Common myeloid progenitor, CD34-positive (primary cell): ENCODE measurements at regions of chr11 and their contacts with region 1.

Region 1: DNA sequence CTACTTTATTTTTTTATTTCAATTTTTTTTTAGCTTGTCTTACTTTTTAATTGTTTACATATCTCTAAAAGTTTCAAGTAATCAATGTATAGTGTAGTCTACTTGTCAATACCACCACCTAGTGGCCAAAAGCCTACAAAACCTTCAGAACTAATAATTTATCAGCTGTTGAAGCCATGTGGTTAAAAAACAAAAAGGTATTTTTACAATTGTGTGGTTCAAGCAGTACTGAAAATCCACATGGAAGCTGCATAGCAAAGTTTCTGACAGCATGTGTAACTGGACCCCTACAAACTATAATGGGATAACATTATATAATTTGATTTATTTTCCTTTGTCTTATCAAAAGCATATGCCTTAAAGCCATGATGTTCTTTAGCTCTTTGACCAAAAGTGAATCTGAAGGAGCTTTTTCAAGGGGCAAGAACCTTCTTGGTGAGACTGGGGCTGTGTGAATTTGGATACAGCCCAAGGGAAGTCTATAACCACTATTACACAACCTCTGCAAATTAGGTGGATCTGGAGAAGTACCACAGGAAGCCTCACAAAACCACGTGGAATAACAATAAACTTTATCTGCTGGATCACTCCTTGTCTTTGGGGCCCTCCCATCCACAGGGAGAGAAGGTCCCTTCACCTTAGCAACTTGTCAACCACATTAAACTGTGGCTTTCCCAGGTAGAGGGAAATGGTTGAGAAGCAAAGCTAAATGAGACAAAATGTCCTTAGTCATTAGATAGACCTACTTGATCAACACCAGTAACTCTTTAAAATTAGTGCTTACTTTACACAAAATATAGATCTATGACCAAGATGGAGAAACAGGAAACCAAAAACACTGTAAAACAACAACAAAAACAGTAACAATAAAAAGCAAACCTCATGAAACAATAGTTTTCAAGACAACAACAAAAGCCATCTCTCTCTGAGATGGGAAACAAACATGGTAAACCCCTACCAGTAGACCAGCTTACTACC is 9.9 kb downstream of the NARS2 start:
- DNase-seq: peak; percentile 81 to 90 (median 86)
- H3K4me3 ChIP-seq: peak overlapping the region in 3 of 7 experiments; percentile 22 to 40 (median 37)
- H3K27ac ChIP-seq: peak overlapping the region in 1 of 2 experiments; percentile 28
- H3K4me1 ChIP-seq: peaks cover 28 to 54% (median 45%) of the 10 kb centered on the region in 4 experiments
- H3K27me3 ChIP-seq: no peaks in the 10 kb centered on the region

Region 2: GRCh38 chr11:78219493-78220217 is 345.1 kb before region 1 on chr11:
- CTCF ChIA-PET with region 1: interaction called, 67 read pairs
- POLR2A ChIA-PET with region 1: no interaction called
- DNase-seq: no peak
- H3K4me3 ChIP-seq: no peak overlapping the region
- H3K27ac ChIP-seq: no peak overlapping the region
- H3K4me1 ChIP-seq: peaks cover 0 to 1% (median under 1%) of the 10 kb centered on the region in 4 experiments
- H3K27me3 ChIP-seq: no peaks in the 10 kb centered on the region

Region 3: GRCh38 chr11:78416305-78417178 is 148.2 kb before region 1 on chr11:
- CTCF ChIA-PET with region 1: interaction called, 23 read pairs
- POLR2A ChIA-PET with region 1: interaction called, 7 read pairs
- DNase-seq: peak; percentile 92 to 95 (median 94)
- H3K4me3 ChIP-seq: peak overlapping the region; percentile 63 to 91 (median 81)
- H3K27ac ChIP-seq: peak overlapping the region; percentile 72 to 88
- H3K4me1 ChIP-seq: peaks cover 20 to 57% (median 51%) of the 10 kb centered on the region in 4 experiments
- H3K27me3 ChIP-seq: no peaks in the 10 kb centered on the region

Region 4: DNA sequence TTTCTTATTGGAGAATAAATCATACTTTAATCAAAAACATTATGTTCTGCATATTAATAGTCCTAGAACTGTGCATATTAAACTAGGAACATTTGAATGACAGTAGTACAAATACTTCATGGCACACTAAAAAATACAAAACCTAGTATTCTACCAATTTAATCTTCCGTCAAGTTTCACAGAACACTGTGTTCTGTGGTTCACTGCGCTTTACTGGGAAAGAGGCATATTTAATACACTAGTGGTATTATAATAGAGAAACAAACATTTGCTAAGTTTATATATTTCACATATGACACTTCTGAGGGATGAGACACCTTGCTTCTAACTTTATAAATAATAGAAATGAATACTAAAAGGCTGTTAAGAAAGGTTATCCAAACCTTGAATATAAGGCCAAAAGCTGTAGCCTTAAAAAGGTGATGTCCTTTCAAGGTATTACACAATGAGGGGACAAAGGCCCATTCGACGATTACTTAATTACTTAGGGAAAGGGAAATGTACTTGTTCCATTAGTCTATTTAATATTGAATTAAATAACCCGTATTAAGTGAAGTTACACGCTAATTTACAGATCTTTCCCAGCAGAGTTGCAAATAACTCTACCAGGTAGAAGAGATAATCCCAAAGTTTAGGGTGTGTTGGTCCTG is 38.2 kb before region 1 on chr11:
- CTCF ChIA-PET with region 1: no interaction called
- POLR2A ChIA-PET with region 1: no interaction called
- DNase-seq: no peak
- H3K4me3 ChIP-seq: no peak overlapping the region
- H3K27ac ChIP-seq: no peak overlapping the region
- H3K4me1 ChIP-seq: no peaks in the 10 kb centered on the region
- H3K27me3 ChIP-seq: no peaks in the 10 kb centered on the region

Region 5: DNA sequence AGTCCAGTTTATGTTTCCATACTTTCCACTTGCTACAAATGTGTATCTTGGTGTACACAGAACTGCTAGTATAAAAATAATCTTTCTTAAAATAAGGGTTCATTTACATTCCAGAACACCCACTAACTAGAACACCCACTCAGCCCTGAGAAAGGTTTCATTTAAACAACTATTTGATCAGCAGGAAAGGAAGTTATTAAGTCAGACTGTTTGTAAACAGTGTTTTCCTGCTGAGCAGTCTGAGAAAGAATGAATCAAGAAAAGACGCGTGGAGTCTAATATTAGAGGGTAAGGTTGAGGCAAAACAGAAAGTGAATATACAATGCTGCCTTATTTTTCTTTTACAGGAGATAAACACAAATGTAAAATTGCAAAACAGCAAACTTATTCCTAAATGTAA is 22.8 kb before region 1 on chr11:
- CTCF ChIA-PET with region 1: interaction called, 11 read pairs
- POLR2A ChIA-PET with region 1: no interaction called
- DNase-seq: peak in 1 of 3 donors; percentile 13
- H3K4me3 ChIP-seq: no peak overlapping the region
- H3K27ac ChIP-seq: no peak overlapping the region
- H3K4me1 ChIP-seq: no peaks in the 10 kb centered on the region
- H3K27me3 ChIP-seq: no peaks in the 10 kb centered on the region

Region 6: DNA sequence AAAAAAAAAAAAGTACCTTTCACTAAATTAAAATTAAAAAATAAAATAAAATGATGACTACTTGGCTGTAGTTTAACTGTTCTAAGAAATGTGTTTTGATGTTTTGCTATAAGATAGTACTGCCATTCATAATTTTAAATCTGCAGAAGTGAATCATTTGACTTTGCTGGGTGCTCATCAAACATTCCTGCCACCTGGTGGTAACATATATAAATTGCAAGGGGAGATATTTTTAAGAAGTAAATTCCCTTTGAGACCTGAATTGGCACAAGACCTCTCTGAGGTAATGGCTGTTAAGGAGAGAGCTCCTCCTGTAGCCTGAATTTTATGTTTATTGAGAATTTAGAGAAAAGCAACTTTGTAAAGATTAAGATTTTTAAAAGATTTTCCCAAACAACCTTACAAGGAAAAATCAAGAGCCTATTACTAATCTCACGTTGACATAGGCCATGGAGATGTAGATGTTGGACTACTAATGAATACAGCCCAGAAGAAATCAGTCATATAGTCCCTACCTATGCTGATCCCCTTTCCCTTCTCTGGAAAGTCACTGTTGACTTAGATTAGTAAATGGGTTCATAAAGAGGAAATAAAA is 21.8 kb after region 1 on chr11:
- CTCF ChIA-PET with region 1: interaction called, 11 read pairs
- POLR2A ChIA-PET with region 1: no interaction called
- DNase-seq: peak; percentile 40 to 56 (median 48)
- H3K4me3 ChIP-seq: no peak overlapping the region
- H3K27ac ChIP-seq: no peak overlapping the region
- H3K4me1 ChIP-seq: no peaks in the 10 kb centered on the region
- H3K27me3 ChIP-seq: peaks cover 0 to 1% (median 0%) of the 10 kb centered on the region in 5 experiments